ENCODE measurements at regions of chr14 and their contacts with region 1.

Region 1: DNA sequence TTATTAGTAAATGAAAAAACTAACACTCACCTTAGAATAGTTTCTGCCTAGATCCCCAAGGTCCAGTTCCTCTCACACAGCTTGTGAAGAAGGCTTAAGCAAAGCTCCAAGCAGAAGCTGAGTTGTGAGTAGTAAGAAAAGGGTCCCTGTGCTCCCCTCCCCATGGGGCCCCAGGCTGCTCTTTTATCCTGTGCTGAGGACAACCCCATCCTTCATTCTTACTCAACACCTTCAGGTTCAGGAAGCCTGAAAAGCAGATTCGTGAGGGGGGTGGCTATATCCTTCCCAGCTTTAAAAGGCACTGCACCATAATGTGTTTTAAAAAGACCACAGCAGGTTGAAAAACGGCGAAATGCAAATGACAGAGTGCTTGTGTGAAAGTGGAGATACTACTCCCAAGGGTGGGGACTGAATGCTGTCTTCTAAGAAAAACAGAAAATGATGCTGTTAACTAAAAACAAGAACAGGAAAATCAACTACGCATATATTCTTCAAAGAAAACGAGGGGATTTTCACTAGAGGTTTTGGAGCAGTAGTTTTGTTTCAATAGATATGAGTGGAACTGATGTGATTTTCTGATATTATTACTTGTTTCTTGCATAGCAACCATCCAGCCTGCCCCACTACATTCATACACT is 182.7 kb downstream of the KTN1 start:
- DNase-seq: no peak
- ATAC-seq: no peak
- H3K4me3 ChIP-seq: no peak overlapping the region
- H3K27ac ChIP-seq: no peak overlapping the region
- H3K4me1 ChIP-seq: no peaks in the 10 kb centered on the region
- H3K27me3 ChIP-seq: no peaks in the 10 kb centered on the region
- CTCF ChIP-seq: no peak

Region 2: GRCh38 chr14:55572578-55572977 is 190.1 kb before region 1 on chr14:
- CTCF ChIA-PET with region 1: no interaction called
- POLR2A ChIA-PET with region 1: no interaction called
- intact Hi-C with region 1: no loop called
- DNase-seq: peak; percentile 46
- ATAC-seq: peak; percentile 53
- H3K4me3 ChIP-seq: no peak overlapping the region
- H3K27ac ChIP-seq: no peak overlapping the region
- H3K4me1 ChIP-seq: peaks cover 18% of the 10 kb centered on the region
- H3K27me3 ChIP-seq: no peaks in the 10 kb centered on the region
- CTCF ChIP-seq: peak; percentile 28; the same call in 1 of the 2 replicates

Region 3: GRCh38 chr14:55846826-55847446 is 84.2 kb after region 1 on chr14:
- CTCF ChIA-PET with region 1: no interaction called
- POLR2A ChIA-PET with region 1: no interaction called
- intact Hi-C with region 1: no loop called
- DNase-seq: peak; percentile 55
- ATAC-seq: peak; percentile 40
- H3K4me3 ChIP-seq: no peak overlapping the region
- H3K27ac ChIP-seq: peak overlapping the region; percentile 56
- H3K4me1 ChIP-seq: peaks cover 32% of the 10 kb centered on the region
- H3K27me3 ChIP-seq: no peaks in the 10 kb centered on the region
- CTCF ChIP-seq: no peak

Region 4: GRCh38 chr14:55973285-55973800 is 210.6 kb after region 1 on chr14:
- CTCF ChIA-PET with region 1: no interaction called
- POLR2A ChIA-PET with region 1: interaction called, 14 read pairs
- intact Hi-C with region 1: no loop called
- DNase-seq: no peak
- ATAC-seq: no peak
- H3K4me3 ChIP-seq: no peak overlapping the region
- H3K27ac ChIP-seq: no peak overlapping the region
- H3K4me1 ChIP-seq: no peaks in the 10 kb centered on the region
- H3K27me3 ChIP-seq: peaks cover 8% of the 10 kb centered on the region; the same call in 1 of the 2 replicates
- CTCF ChIP-seq: no peak